ENCODE measurements at regions of chr3 and their contacts with region 1.

Region 1: GRCh38 chr3:23884489-23884888 is 32.3 kb downstream of the NKIRAS1 start:
- DNase-seq: no peak
- ATAC-seq: peak in 1 of 4 donors; percentile 25
- H3K4me3 ChIP-seq: no peak overlapping the region
- H3K27ac ChIP-seq: no peak overlapping the region
- H3K4me1 ChIP-seq: peaks cover 30% of the 10 kb centered on the region
- H3K27me3 ChIP-seq: no peaks in the 10 kb centered on the region
- CTCF ChIP-seq: peak; percentile 18

Region 2: GRCh38 chr3:23834082-23834870 is 50.2 kb before region 1 on chr3:
- intact Hi-C with region 1: loop called in 1 of 2 experiments (anchors 5 kb)
- DNase-seq: no peak
- ATAC-seq: peak in 3 of 4 donors; percentile 45 to 65 (median 59)
- H3K4me3 ChIP-seq: no peak overlapping the region
- H3K27ac ChIP-seq: peak overlapping the region; percentile 27
- H3K4me1 ChIP-seq: peaks cover 62% of the 10 kb centered on the region
- H3K27me3 ChIP-seq: no peaks in the 10 kb centered on the region
- CTCF ChIP-seq: peak; percentile 39

Measured in psoas muscle (tissue), 8 donors.